Left ventricle myocardium superior (tissue), 1 donor: ENCODE measurements at regions of chr4 and their contacts with region 1.

Region 1: GRCh38 chr4:86497980-86498862 is 95.9 kb upstream of the PTPN13 start:
- DNase-seq: no peak
- ATAC-seq: peak; percentile 86

Region 2: DNA sequence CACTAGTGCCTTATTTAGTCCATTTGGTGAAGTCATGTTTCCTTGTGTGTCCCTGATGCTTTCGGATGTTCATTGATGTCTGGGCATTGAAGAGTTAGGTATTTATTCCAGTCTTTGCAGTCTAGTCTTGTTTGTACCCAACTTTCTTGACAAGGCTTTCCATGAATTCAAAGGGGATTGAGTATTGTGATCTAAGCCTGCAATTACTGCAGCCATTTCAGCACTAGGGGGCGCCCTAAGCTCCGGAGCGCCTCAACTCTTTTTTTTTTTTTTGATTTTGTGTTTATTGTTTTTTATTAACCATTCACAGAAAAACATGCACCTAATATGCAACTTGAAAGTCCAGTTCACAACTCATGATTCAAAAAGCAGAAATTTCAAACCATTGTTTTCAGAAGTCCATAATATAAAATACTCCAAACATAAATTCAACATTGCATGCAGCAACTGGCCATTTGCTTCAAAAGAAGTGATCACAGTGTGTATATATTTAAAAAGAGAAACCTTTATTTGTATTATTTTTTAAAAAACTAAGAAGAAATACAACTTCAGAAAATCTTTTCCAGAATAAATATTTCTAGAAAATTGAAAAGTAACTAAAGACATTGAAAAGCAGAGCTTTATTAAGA is 155.1 kb after region 1 on chr4:
- intact Hi-C with region 1: no loop called
- DNase-seq: no peak
- ATAC-seq: no peak

Region 3: DNA sequence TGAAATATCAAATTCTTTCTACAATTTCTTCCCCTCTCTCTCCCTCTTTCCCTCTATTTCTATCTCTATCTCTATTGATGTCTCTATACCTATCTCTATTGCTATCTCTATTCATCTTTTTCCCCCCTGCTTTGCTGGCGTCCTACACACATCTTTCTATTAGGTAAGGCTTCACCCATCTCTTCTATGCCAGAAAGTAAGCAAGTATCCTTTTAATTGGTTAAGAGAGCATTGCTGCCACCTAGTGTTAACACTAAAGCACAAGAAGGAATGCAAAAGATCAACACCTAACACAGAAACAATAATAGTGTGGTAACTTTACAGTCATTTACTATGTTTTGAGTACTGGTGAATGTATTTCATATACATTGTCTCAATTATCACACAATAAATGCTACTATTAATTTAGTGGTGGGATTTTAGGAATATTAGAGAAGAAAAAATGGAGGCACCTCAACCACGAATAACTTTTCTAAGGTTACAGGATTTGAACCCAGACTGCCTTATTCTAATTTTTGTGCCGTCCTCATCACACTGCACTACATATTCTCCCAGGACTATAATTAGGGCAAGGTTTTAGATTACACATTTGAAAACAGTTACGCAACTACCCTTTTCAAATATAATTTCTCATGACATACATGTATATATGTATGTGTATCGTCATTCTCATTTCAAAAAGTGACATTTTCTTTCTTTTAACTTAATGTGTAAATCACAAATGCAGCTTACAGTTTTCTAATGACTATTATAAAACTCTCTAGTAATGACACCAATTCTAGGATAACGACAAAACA is 397.7 kb after region 1 on chr4:
- intact Hi-C with region 1: loop called (anchors 2 kb)
- DNase-seq: no peak
- ATAC-seq: peak; percentile 40